ENCODE measurements at regions of chr17 and their contacts with region 1.

Region 1: DNA sequence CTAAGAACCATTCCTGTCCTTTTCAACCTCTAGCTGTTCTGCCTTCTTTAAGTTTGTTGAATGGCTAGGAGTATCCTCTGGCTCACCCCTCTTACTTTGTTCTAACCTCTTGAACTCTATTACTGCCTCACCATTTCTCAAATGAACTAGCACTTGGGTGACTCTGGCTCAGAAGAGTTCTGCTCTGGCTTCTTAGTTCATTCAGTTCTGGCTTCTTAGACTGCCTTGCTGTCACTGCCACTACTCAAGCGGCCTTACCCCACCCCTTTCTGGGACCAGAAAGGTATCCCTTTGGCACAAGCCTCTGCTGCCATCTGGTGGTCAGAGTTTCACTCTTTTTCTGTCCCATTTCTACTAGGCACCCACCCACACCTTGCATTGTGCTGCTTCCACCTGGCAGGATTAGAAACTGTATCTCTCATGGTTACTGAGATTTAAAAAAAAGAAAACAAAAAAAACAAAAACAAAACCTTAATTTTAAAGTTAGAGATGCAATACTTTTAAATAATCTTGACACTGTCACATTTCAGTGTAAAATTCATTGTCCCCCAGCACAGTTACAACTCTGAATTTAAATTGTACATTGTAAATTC is 6.8 kb upstream of the ABCA10 start:
- DNase-seq: peak; percentile 78 to 94
- H3K4me3 ChIP-seq: no peak overlapping the region
- H3K27ac ChIP-seq: no peak overlapping the region
- H3K4me1 ChIP-seq: peaks cover 0 to 4% (median 0%) of the 10 kb centered on the region in 4 donors
- H3K27me3 ChIP-seq: no peaks in the 10 kb centered on the region
- CTCF ChIP-seq: peak in 5 of 7 experiments; percentile 20 to 79 (median 70)
- EP300 ChIP-seq: no peak
- POLR2A ChIP-seq: no peak

Region 2: GRCh38 chr17:68777243-68777855 is 458.1 kb before region 1 on chr17:
- intact Hi-C with region 1: loop called (anchors 5 kb)
- DNase-seq: peak; percentile 45 to 89
- H3K4me3 ChIP-seq: peak overlapping the region in 1 of 4 donors; percentile 8
- H3K27ac ChIP-seq: peak overlapping the region in 3 of 5 donors; percentile 14 to 59 (median 34)
- H3K4me1 ChIP-seq: peaks cover 4 to 26% (median 14%) of the 10 kb centered on the region in 4 donors
- H3K27me3 ChIP-seq: no peaks in the 10 kb centered on the region
- CTCF ChIP-seq: peak in 5 of 7 experiments; percentile 38 to 73 (median 58)
- EP300 ChIP-seq: no peak
- POLR2A ChIP-seq: no peak

Region 3: GRCh38 chr17:68794636-68795434 is 440.6 kb before region 1 on chr17:
- intact Hi-C with region 1: no loop called
- DNase-seq: peak in 1 of 2 donors; percentile 76
- H3K4me3 ChIP-seq: peak overlapping the region in 1 of 4 donors; percentile 5
- H3K27ac ChIP-seq: peak overlapping the region in 4 of 5 donors; percentile 60 to 80 (median 72)
- H3K4me1 ChIP-seq: peaks cover 7 to 37% (median 22%) of the 10 kb centered on the region in 4 donors
- H3K27me3 ChIP-seq: no peaks in the 10 kb centered on the region
- CTCF ChIP-seq: peak in 3 of 7 experiments; percentile 11 to 25 (median 25)
- EP300 ChIP-seq: no peak
- POLR2A ChIP-seq: no peak

Region 4: DNA sequence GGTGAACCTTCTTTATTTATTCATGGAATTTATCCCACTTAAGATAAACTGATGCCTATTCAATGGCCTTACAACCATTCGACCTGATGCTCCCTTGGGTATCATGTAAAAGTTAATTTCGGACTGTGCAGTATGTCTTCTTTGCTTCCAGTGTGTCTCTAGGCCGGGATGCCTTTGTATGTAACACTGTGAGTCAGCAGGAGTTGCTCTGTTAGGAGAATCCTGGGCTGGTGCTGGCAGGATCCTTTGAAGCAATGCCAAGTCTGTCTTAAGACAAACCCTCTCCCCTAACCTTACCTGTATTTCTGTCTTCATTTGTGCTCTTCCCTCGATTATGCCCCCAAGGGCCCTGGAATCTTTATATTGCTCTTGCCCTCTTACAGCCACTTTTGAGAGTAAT is 242.3 kb before region 1 on chr17:
- intact Hi-C with region 1: no loop called
- DNase-seq: no peak
- H3K4me3 ChIP-seq: no peak overlapping the region
- H3K27ac ChIP-seq: no peak overlapping the region
- H3K4me1 ChIP-seq: no peaks in the 10 kb centered on the region
- H3K27me3 ChIP-seq: no peaks in the 10 kb centered on the region
- CTCF ChIP-seq: no peak
- EP300 ChIP-seq: no peak
- POLR2A ChIP-seq: no peak

Region 5: DNA sequence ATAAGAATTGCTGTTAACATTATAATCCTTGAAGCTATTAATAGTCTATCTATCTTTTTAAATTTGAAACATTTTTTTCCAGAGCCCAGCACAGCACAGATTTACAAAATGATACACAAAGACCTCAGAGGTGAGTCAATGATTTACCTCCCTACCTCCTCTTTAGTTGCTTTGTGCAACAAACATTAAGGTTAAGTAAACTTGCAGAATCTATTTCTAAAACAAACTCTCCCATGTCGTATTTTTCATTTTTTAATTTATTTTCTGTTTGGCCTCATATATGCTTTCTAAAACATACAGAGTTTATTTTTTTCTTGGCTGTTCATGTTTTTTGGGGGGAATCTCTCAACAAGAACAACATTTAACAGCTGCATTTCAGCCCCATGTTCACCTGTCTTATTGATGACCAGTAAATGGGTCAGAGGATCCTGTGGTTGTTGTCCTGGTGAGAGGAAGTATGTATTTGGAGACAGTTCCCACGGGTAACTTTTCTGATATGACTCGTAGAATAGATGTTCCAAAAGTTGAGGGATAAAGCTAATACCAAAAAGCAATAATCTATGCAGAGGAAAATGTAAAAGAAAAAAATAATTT is 217.3 kb before region 1 on chr17:
- intact Hi-C with region 1: no loop called
- DNase-seq: no peak
- H3K4me3 ChIP-seq: no peak overlapping the region
- H3K27ac ChIP-seq: no peak overlapping the region
- H3K4me1 ChIP-seq: no peaks in the 10 kb centered on the region
- H3K27me3 ChIP-seq: no peaks in the 10 kb centered on the region
- CTCF ChIP-seq: no peak
- EP300 ChIP-seq: no peak
- POLR2A ChIP-seq: no peak

Measured in stomach (tissue), 19 donors.